Heart left ventricle (tissue), 16 donors: ENCODE measurements at regions of chr16 and their contacts with region 1.

Region 1: GRCh38 chr16:11255737-11256660 is at the start of gene SOCS1:
- DNase-seq: peak; percentile 86 to 93 (median 89)
- ATAC-seq: peak; percentile 48 to 83 (median 82)
- H3K4me3 ChIP-seq: peak within 1 kb of the TSS; percentile 63 to 94 (median 82)
- H3K27ac ChIP-seq: peak within 1 kb of the TSS; percentile 90 to 100 (median 98)
- H3K4me1 ChIP-seq: peaks cover 0 to 59% (median 36%) of the 10 kb centered on the region in 12 donors
- H3K27me3 ChIP-seq: no peaks in the 10 kb centered on the region
- CTCF ChIP-seq: peak; percentile 68 to 97 (median 91)
- POLR2A ChIP-seq: peak; percentile 92 to 97
- total RNA-seq, gene SOCS1: 0.63 to 14.8 (median 2.7) TPM

Region 2: DNA sequence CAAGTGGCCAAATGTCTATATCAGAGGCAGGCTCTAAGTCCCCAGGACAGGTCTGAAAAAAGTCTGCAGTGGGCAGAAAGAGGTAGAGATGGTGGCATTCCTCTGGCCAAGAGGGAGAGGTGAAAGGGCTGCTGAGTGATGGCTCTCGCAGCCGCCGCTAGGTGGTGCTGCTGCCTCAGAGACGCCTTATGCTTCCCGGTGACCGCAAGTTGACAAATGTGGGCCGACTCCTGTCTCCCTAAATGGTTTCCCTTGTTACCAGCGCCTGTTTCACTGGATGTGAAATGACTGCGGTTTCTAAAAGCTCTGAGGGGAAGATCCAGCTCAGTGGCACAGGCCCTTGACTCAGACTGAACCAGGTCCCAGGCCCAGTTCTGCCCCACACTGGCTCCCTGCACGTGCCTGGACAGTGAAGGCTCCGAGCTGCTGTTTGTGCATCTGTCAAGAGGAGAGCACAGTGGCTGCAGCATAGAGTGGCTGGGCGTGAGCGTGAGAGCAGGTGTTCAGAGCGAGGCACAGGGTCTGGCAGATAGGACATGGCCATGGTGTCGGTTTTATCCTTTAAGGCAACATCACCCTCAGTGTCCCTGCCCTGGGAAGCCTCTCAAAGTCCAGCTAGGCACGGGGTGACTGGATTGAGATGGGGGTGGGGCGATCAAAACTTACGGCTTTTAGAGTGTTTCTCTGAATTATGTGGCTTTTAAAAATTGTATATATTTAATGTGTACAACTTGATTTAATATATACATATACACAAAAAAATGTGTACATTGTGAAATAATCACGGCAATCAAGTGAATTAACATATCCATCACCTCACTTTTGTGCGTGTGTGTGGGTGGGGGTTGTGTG is 291.7 kb before region 1 on chr16:
- intact Hi-C with region 1: loop called in 2 of 10 experiments (anchors 2 kb)
- DNase-seq: peak; percentile 79 to 90 (median 84)
- ATAC-seq: peak; percentile 78 to 89 (median 84)
- H3K4me3 ChIP-seq: no peak overlapping the region
- H3K27ac ChIP-seq: peak overlapping the region in 2 of 12 donors; percentile 8 to 43
- H3K4me1 ChIP-seq: peaks cover 0 to 33% (median 20%) of the 10 kb centered on the region in 12 donors
- H3K27me3 ChIP-seq: no peaks in the 10 kb centered on the region
- CTCF ChIP-seq: peak; percentile 90 to 98 (median 94)
- POLR2A ChIP-seq: no peak

Region 3: DNA sequence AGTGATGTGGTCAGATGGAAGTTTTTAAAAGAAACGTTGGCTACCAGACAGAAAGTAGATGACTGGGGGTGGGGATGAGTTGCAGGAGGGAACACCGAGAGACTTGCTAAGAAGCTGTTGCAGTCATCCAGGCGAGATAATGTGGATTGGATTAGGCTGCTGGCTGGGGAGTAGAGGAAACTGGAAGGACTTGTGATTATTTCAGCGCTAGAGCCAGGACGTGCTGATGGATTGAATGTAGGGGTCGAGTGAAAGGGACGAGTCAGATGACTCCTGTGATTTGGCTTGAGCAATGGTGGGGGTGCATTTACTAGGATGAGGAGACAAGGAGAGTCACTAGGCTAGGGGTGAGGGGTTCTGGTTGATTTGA is 223.1 kb before region 1 on chr16:
- intact Hi-C with region 1: loop called in 1 of 10 experiments (anchors 10 kb)
- DNase-seq: peak in 4 of 5 donors; percentile 34 to 74 (median 59)
- ATAC-seq: peak; percentile 72 to 87 (median 77)
- H3K4me3 ChIP-seq: no peak overlapping the region
- H3K27ac ChIP-seq: peak overlapping the region; percentile 11 to 76 (median 64)
- H3K4me1 ChIP-seq: peaks cover 0 to 58% (median 29%) of the 10 kb centered on the region in 12 donors
- H3K27me3 ChIP-seq: no peaks in the 10 kb centered on the region
- CTCF ChIP-seq: no peak
- POLR2A ChIP-seq: no peak

Region 4: DNA sequence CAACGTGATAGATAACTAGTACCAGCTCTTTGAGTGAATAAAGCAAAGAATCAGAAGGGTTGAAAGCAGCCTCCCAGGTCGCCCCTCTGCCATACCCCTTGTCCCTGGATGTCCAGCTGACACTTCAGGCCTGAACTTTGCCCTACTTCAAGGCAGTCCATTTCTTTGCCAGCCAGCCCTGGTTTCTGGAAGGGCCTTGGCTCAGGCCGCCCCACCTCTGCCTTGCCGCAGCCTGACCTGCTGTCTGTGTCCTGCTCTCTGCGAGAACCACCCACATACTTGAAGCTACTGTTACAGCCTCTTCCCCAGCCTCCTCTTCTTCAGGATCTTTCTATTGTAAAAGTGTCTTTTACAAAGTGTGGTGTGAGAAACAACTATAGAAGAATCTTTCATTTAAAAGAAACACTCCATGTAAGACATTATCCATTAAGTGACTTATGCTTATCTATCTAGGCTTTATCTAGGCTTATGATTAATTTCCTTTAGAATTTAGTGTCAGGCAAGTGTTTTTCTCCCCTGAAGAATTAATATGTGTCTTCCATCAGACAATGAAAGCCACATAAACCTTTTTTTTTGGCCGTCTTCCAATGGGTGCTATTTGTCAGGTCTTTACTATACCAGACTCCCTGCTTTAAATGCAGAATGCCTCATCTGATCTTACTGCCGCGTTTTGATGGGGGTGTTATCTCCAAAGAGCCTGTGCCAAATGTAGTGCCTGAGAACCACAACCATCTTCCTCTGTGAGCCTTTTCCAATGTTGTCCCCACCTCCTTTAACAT is 133.9 kb before region 1 on chr16:
- intact Hi-C with region 1: no loop called
- DNase-seq: no peak
- ATAC-seq: peak in 1 of 4 donors; percentile 82
- H3K4me3 ChIP-seq: no peak overlapping the region
- H3K27ac ChIP-seq: peak overlapping the region in 1 of 12 donors; percentile 24
- H3K4me1 ChIP-seq: peaks cover 0 to 17% (median 0%) of the 10 kb centered on the region in 12 donors
- H3K27me3 ChIP-seq: no peaks in the 10 kb centered on the region
- CTCF ChIP-seq: no peak
- POLR2A ChIP-seq: no peak

Region 5: DNA sequence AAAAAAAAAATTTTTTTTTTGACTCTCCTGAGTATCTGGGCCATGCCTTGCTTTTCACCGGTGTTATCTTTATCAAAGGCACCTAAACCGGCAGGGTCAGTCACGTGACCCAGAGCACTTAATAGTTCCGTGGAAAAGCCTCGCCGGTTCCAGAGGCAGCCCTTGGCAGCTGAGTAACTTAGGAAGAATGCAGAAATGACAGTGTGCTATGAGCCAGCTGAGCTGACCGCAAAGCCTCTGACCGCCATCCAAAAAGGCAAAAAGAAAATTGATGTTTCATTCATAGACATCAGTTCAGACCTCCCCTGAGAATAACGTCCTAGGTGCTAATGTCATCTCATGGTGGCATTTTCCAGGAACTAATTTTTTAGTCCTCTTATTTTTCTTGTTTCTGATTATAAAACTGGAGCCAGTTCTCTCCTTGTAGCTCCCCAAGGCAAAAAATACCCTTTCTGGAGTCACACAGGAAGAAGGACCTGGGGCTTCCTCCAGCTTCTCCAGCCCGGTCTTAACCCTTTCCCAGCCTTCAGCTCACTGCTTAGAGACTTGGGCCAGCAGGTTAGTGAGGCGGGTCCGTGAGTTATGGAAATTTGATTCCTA is 122.6 kb before region 1 on chr16:
- intact Hi-C with region 1: loop called in 2 of 10 experiments (anchors 2 to 10 kb)
- DNase-seq: peak; percentile 73 to 90 (median 80)
- ATAC-seq: peak; percentile 56 to 73 (median 66)
- H3K4me3 ChIP-seq: no peak overlapping the region
- H3K27ac ChIP-seq: peak overlapping the region in 11 of 12 donors; percentile 45 to 84 (median 74)
- H3K4me1 ChIP-seq: peaks cover 0 to 84% (median 58%) of the 10 kb centered on the region in 12 donors
- H3K27me3 ChIP-seq: no peaks in the 10 kb centered on the region
- CTCF ChIP-seq: no peak
- POLR2A ChIP-seq: peak in 1 of 2 donors; percentile 15

Region 6: GRCh38 chr16:11224096-11224893 is 31.7 kb before region 1 on chr16:
- intact Hi-C with region 1: loop called in 2 of 10 experiments (anchors 2 to 5 kb)
- DNase-seq: peak; percentile 33 to 90 (median 77)
- ATAC-seq: peak; percentile 94 to 98 (median 96)
- H3K4me3 ChIP-seq: no peak overlapping the region
- H3K27ac ChIP-seq: peak overlapping the region in 6 of 12 donors; percentile 54 to 88 (median 75)
- H3K4me1 ChIP-seq: peaks cover 0 to 34% (median 10%) of the 10 kb centered on the region in 12 donors
- H3K27me3 ChIP-seq: no peaks in the 10 kb centered on the region
- CTCF ChIP-seq: no peak
- POLR2A ChIP-seq: no peak

Region 7: DNA sequence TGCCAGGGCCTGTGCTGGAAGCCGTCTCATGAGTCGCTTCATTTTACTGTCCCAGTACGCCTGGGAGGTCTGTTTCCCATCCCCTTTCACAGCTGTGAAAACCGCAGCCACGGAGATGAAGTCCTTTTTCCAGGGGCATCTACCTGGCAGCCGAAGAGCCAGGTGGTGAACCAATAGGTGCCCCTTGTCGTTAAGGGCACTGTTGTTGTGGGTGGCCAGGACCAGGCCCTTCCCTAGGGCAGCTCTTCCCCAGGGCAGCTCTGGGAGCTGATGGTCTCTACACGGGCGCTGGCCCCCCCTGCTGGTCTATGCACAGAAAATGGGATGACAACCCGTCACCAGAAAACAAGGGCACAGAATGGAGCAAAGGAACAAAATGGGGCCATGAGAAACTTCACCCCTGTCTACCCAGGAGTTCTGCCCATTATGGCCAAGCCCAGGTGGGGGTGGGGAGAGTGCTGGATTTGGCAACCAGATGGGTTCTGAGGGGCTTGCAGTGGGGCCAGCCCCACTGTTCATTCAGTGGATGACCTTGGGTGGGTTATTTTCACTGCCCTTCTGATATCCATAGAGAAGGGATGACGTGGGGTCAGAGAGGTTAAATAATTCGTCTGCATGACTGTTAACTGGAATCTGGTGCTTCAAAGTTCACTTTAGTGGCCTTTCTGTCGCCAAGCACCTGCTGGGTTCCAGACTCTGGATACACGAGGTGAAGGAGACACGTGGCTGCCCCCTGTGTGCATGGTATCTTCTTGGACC is 100.8 kb after region 1 on chr16:
- intact Hi-C with region 1: loop called (anchors 1 to 10 kb)
- DNase-seq: peak; percentile 59 to 86 (median 69)
- ATAC-seq: peak; percentile 40 to 68 (median 59)
- H3K4me3 ChIP-seq: no peak overlapping the region
- H3K27ac ChIP-seq: peak overlapping the region in 10 of 12 donors; percentile 52 to 87 (median 75)
- H3K4me1 ChIP-seq: peaks cover 5 to 64% (median 25%) of the 10 kb centered on the region in 12 donors
- H3K27me3 ChIP-seq: peaks cover 0 to 34% (median 0%) of the 10 kb centered on the region in 9 donors
- CTCF ChIP-seq: peak; percentile 45 to 72 (median 55)
- POLR2A ChIP-seq: no peak

Region 8: GRCh38 chr16:11370084-11370931 is 114.3 kb after region 1 on chr16:
- intact Hi-C with region 1: no loop called
- DNase-seq: no peak
- ATAC-seq: no peak
- H3K4me3 ChIP-seq: no peak overlapping the region
- H3K27ac ChIP-seq: no peak overlapping the region
- H3K4me1 ChIP-seq: no peaks in the 10 kb centered on the region
- H3K27me3 ChIP-seq: peaks cover 0 to 6% (median 0%) of the 10 kb centered on the region in 9 donors
- CTCF ChIP-seq: no peak
- POLR2A ChIP-seq: no peak